ENCODE measurements at regions of chr14 and their contacts with region 1.

Region 1: GRCh38 chr14:24366721-24367513 is 1.1 kb upstream of the NFATC4 start:
- DNase-seq: peak in 7 of 9 donors; percentile 12 to 25 (median 19)
- ATAC-seq: peak; percentile 51
- H3K4me3 ChIP-seq: peak overlapping the region; percentile 43
- H3K4me3 Mint-ChIP-seq: peak overlapping the region; percentile 54 to 88 (median 82)
- H3K27ac ChIP-seq: no peak overlapping the region
- H3K27ac Mint-ChIP-seq: peak overlapping the region in 1 of 9 donors; percentile 45
- H3K4me1 ChIP-seq: peaks cover 12 to 26% of the 10 kb centered on the region in 2 donors
- H3K4me1 Mint-ChIP-seq: peaks cover 23 to 36% (median 29%) of the 10 kb centered on the region in 7 donors
- H3K27me3 ChIP-seq: peaks cover 10 to 23% of the 10 kb centered on the region in 2 donors
- H3K27me3 Mint-ChIP-seq: peaks cover 33 to 67% (median 43%) of the 10 kb centered on the region in 5 donors

Region 2: GRCh38 chr14:24339284-24340151 is 27.4 kb before region 1 on chr14 and contains the start of gene RIPK3:
- CTCF ChIA-PET with region 1: interaction called, 3 read pairs
- POLR2A ChIA-PET with region 1: interaction called, 3 read pairs
- intact Hi-C with region 1: loop called in 1 of 2 experiments (anchors 2 kb)
- DNase-seq: peak; percentile 48 to 72 (median 69)
- ATAC-seq: peak; percentile 90
- H3K4me3 ChIP-seq: peak within 1 kb of the TSS; percentile 96
- H3K4me3 Mint-ChIP-seq: peak within 1 kb of the TSS; percentile 90 to 99 (median 96)
- H3K27ac ChIP-seq: peak within 1 kb of the TSS; percentile 74
- H3K27ac Mint-ChIP-seq: peak within 1 kb of the TSS; percentile 81 to 98 (median 95)
- H3K4me1 ChIP-seq: peaks cover 17 to 18% of the 10 kb centered on the region in 2 donors
- H3K4me1 Mint-ChIP-seq: peaks cover 22 to 35% (median 30%) of the 10 kb centered on the region in 7 donors
- H3K27me3 ChIP-seq: peaks cover 0 to 5% of the 10 kb centered on the region in 2 donors
- H3K27me3 Mint-ChIP-seq: peaks cover 6 to 42% (median 8%) of the 10 kb centered on the region in 5 donors
- total RNA-seq, gene RIPK3: 19.9 to 47.5 (median 36.8) TPM

Region 3: DNA sequence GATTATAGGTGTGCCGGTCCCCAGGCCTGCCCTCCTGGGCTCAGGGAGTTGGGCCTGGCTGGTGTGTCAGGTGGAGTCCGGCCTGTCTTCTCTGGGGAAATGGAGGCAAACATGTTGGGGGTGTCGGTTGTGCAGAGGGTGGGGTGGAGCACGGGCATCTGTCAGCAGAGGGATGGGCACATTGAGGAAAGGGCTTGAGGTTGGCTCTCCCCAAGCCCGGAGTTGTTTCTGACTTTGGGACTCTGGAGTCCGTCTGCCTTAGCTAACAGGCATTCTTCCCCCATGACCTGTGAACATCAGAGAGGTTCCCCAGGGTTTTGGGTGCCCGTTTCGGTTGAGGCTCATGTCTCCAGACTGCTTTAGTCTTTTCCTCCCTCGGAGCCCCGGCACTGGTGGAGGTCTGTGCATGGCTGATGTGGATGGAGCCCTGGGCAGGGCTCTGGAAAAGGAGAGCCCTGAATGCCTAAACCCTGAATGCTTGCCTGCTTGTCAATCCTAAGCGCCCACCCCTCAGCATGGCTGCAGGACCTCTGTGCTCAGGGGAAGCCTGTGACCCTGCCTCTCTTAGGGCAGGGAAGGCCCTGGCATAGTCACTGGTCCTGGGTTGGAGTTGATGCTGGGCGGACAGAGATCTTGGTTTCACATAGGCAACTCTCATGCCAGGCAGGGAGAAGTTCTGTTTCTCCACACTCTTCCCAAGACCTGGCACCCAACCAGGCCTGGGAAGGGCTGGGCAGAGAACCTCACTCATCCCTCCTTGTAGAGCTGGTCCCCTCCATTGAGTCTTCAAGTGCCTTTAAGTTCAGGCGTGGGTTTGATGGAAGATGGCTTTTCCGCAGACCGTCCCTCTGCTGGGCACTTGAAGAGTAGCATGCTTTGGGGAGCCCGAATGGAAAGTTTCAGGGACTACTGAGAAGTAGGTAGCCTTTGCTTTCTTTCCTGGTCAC is 44.8 kb after region 1 on chr14:
- CTCF ChIA-PET with region 1: no interaction called
- POLR2A ChIA-PET with region 1: interaction called, 3 read pairs
- intact Hi-C with region 1: loop called in 1 of 2 experiments (anchors 5 kb)
- DNase-seq: peak in 3 of 9 donors; percentile 26 to 31 (median 28)
- ATAC-seq: peak; percentile 68
- H3K4me3 ChIP-seq: no peak overlapping the region
- H3K4me3 Mint-ChIP-seq: no peak overlapping the region
- H3K27ac ChIP-seq: no peak overlapping the region
- H3K27ac Mint-ChIP-seq: no peak overlapping the region
- H3K4me1 ChIP-seq: no peaks in the 10 kb centered on the region
- H3K4me1 Mint-ChIP-seq: no peaks in the 10 kb centered on the region
- H3K27me3 ChIP-seq: no peaks in the 10 kb centered on the region
- H3K27me3 Mint-ChIP-seq: peaks cover 0 to 6% (median 0%) of the 10 kb centered on the region in 5 donors

Region 4: GRCh38 chr14:24665440-24665991 is 298.6 kb after region 1 on chr14:
- CTCF ChIA-PET with region 1: no interaction called
- POLR2A ChIA-PET with region 1: no interaction called
- intact Hi-C with region 1: no loop called
- DNase-seq: peak in 1 of 9 donors; percentile 50
- ATAC-seq: peak; percentile 72
- H3K4me3 ChIP-seq: peak overlapping the region; percentile 26
- H3K4me3 Mint-ChIP-seq: peak overlapping the region in 6 of 10 donors; percentile 7 to 87 (median 38)
- H3K27ac ChIP-seq: no peak overlapping the region
- H3K27ac Mint-ChIP-seq: peak overlapping the region in 3 of 9 donors; percentile 48 to 94 (median 51)
- H3K4me1 ChIP-seq: peaks cover 10 to 33% of the 10 kb centered on the region in 2 donors
- H3K4me1 Mint-ChIP-seq: peaks cover 9 to 89% (median 12%) of the 10 kb centered on the region in 7 donors
- H3K27me3 ChIP-seq: no peaks in the 10 kb centered on the region
- H3K27me3 Mint-ChIP-seq: peaks cover 0 to 8% (median 5%) of the 10 kb centered on the region in 5 donors